Lower lobe of right lung (tissue), 2 donors: ENCODE measurements at regions of chr11 and their contacts with region 1.

Region 1: DNA sequence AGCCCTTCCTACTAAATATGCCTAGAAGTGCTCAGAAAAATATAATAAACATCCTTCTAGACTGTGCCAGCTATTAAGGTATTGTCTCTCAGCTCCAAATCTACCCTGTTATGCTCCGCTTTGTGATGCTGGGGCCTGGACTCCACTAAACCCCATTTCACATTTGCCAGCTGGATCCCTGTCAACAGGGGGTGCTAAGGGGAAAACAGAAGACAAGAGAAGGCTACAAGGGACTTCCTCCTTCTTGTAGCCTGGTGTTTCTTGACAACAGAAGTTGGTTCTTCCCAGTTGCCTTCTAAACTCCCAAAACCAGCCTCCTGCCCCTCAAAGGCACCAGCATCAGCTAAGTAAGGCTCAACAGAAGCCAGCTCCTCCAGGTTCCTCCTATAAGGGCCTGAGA is 5.2 kb downstream of the NUMA1 start:
- DNase-seq: no peak
- ATAC-seq: peak in 1 of 2 donors; percentile 34
- H3K4me3 ChIP-seq: no peak overlapping the region
- H3K27ac ChIP-seq: peak overlapping the region; percentile 46
- H3K4me1 ChIP-seq: peaks cover 46% of the 10 kb centered on the region
- H3K27me3 ChIP-seq: no peaks in the 10 kb centered on the region
- CTCF ChIP-seq: no peak

Region 2: DNA sequence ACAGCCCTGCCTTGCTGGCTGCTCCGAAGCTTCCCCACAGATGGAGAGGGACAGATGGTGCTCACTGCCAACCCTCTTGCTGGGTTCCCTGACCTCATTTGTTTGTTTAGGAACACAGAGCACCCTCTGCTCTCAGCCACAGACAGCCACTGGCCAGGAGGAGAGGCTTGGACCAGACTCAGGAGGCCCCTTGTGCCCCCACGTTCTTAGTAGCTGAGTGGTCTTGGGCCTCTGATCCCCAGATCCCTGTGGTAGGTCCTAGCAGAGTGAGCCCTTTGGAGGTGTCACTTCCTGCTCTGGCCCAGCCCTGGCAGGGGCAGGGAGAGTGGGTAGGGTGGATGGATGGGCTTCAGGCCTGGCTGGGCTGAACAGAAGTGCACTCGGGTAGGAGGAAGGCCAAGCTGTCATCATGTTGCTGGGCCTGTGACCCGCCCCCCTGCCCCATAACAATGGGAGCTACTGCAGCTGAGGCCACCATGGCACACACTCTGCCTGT is 710.9 kb before region 1 on chr11:
- intact Hi-C with region 1: no loop called
- DNase-seq: no peak
- ATAC-seq: no peak
- H3K4me3 ChIP-seq: no peak overlapping the region
- H3K27ac ChIP-seq: no peak overlapping the region
- H3K4me1 ChIP-seq: no peaks in the 10 kb centered on the region
- H3K27me3 ChIP-seq: no peaks in the 10 kb centered on the region
- CTCF ChIP-seq: no peak

Region 3: GRCh38 chr11:72040726-72041441 is 34.2 kb before region 1 on chr11:
- intact Hi-C with region 1: loop called (anchors 5 kb)
- DNase-seq: peak; percentile 95
- ATAC-seq: peak; percentile 92
- H3K4me3 ChIP-seq: peak overlapping the region; percentile 57
- H3K27ac ChIP-seq: peak overlapping the region; percentile 96
- H3K4me1 ChIP-seq: peaks cover 58% of the 10 kb centered on the region
- H3K27me3 ChIP-seq: no peaks in the 10 kb centered on the region
- CTCF ChIP-seq: no peak

Region 4: DNA sequence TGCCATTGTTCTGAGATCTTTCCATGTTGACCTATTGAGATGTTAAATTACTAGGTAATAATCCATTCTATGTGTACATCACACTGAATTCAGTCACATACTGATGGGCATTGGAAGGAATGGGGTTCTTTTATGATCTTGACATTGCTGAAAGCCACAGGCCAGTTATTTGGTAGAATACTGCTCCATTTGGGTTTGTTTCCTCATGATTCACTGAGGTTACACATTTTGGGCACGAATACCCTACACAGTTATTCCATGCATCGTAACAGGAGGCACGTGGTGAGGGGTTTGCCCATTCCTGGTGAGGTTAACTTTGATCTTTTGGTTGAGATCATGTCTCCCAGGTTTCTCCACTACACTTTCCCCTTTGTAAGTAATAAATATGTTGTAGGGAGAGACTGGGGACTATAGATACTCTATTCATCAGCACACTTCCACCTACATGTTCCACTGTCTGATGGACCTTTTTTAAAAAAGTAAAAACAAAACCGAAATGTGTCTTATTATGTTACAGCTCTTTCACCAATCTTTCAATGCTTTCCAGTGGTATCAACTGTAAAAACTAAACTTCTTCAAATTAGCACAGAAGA is 104.8 kb after region 1 on chr11:
- intact Hi-C with region 1: no loop called
- DNase-seq: no peak
- ATAC-seq: no peak
- H3K4me3 ChIP-seq: no peak overlapping the region
- H3K27ac ChIP-seq: no peak overlapping the region
- H3K4me1 ChIP-seq: no peaks in the 10 kb centered on the region
- H3K27me3 ChIP-seq: peaks cover 4% of the 10 kb centered on the region
- CTCF ChIP-seq: no peak